ENCODE measurements at regions of chr5 and their contacts with region 1.

Region 1: GRCh38 chr5:172984243-172984953 is 827 bp downstream of the ATP6V0E1 start:
- DNase-seq: peak; percentile 50
- H3K4me3 ChIP-seq: peak overlapping the region; percentile 57
- H3K27me3 ChIP-seq: no peaks in the 10 kb centered on the region
- CTCF ChIP-seq: peak; percentile 78

Region 2: DNA sequence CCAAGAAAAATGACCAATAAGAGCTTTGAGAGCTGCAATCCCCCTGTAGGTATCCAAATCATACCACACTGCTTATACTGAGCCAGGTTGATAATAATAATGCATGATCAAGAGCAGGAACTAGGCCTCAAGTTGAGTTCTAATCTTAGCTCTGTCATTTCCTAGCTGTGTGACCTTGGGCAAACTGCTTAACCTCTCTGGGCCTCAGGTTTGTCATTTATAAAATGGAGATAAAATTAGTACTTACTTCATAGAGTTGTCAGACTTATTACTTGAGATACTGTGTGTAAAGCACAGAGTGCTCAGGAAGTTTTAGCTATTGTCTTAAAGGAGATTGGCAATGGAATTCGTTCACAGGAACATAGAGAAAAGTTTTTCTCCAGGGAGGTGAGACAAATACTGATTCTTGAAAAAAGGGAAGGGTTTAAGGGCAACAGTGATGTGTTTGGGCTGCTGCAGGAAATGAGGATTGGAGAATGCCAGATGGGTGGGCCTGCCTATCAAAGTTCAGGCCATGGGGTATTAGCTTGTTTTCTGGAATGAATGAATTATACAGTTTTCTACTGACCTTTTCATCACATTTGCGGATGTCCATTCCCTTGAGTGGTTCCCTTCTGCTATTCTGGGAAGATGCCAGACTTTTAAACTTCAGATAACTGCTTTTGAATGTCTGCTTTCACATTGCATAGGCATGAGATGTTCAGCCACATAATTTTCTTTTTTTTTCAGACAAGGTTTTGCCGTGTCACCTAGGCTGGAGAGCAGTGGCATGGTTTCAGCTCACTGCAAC is 11.1 kb before region 1 on chr5:
- CTCF ChIA-PET with region 1: interaction called, 14 read pairs
- POLR2A ChIA-PET with region 1: no interaction called
- DNase-seq: no peak
- H3K4me3 ChIP-seq: no peak overlapping the region
- H3K27me3 ChIP-seq: no peaks in the 10 kb centered on the region
- CTCF ChIP-seq: no peak

Region 3: DNA sequence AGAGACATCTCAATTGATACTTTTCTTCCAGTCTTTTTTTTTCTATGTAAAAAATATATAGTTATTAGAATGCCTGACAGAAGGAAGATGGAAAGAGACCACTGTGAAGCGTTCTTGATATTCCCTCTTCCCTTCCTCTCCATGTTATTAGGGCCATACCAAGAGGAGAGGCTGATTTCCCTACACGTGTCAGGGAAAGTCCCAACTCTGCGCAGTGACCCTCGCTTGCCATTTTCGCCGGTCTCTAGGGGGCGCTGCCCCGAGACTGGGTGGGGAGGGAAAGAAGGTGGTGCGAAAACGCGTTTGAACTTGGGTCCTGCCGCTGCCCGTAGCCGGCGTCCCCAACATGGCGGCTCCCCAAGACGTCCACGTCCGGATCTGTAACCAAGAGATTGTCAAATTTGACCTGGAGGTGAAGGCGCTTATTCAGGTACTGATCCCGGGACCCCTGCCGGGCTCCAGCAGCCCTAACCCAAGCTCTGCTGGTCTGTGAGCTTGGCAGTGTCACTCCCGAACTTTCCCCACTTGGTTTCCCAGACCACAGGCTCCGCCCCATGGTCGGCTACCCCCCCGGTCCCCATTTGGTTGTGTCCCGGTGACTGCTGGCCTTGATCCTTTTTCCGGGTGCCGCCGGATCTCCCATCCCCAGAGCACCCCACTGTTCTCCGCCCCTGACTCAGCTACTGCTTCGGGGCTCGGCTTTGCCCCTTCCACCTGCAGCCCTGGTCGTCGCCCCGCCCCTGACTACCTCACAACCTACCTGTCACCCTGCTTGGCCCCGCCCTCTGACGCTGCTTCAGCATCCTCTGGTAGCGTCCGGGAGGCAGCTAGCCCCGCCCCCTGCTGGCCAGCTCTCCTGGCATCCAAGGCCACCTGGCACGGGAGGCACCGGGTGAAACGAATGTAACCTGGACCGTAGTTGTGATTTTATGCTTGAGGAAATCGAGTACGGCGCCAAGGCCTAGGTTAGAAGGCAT is 160.1 kb after region 1 on chr5 and contains the start of gene BNIP1:
- CTCF ChIA-PET with region 1: interaction called, 16 read pairs
- POLR2A ChIA-PET with region 1: no interaction called
- DNase-seq: peak; percentile 54
- H3K4me3 ChIP-seq: peak within 1 kb of the TSS; percentile 82
- H3K27me3 ChIP-seq: no peaks in the 10 kb centered on the region
- CTCF ChIP-seq: peak; percentile 99
- polyA plus RNA-seq, gene BNIP1: 16.8 and 17.7 TPM in 2 replicates

Region 4: GRCh38 chr5:173201636-173202276 is 217.4 kb after region 1 on chr5:
- CTCF ChIA-PET with region 1: interaction called, 10 read pairs
- POLR2A ChIA-PET with region 1: no interaction called
- DNase-seq: peak; percentile 32
- H3K4me3 ChIP-seq: no peak overlapping the region
- H3K27me3 ChIP-seq: peaks cover 9% of the 10 kb centered on the region
- CTCF ChIP-seq: no peak

Region 5: GRCh38 chr5:173454754-173455614 is 470.6 kb after region 1 on chr5:
- CTCF ChIA-PET with region 1: no interaction called
- POLR2A ChIA-PET with region 1: no interaction called
- DNase-seq: peak; percentile 99
- H3K4me3 ChIP-seq: no peak overlapping the region
- H3K27me3 ChIP-seq: no peaks in the 10 kb centered on the region
- CTCF ChIP-seq: no peak

Measured in BJ (cell line).